Calu3 (cell line): ENCODE measurements at regions of chr3 and their contacts with region 1.

Region 1: DNA sequence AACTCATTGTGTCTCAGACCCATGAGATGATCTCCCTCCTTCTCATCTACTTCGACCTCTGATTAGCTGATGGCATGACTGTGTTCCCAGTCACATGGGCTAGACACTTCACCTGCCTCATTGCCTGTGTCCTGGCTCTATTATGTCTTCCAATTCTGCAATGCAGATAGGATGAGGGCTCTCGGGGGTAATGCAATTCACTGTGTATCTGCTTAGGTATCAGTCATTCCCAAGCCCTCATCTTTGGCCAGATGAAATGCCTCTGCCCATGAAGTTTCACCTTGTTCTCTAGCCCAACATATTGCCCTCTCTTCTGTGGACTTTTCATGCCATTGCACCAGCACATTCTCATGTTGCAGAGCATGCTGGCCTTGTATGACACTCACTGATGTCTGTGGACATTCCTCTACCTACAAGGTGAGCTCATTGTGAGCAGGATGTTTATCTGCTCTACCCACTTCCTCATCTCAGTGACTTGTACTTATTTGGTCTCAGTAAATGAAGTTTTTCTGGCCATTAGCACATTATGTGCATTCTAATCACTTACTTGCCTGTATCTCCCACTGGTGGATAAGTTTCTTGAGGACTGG is 32.3 kb downstream of the MOBP start:
- DNase-seq: peak; percentile 7
- H3K4me3 Mint-ChIP-seq: no peak overlapping the region
- H3K27ac Mint-ChIP-seq: peak overlapping the region; percentile 26
- H3K4me1 Mint-ChIP-seq: peaks cover 8% of the 10 kb centered on the region
- H3K27me3 Mint-ChIP-seq: peaks cover 34% of the 10 kb centered on the region
- CTCF ChIP-seq: no peak

Region 2: GRCh38 chr3:39414421-39414907 is 85.3 kb before region 1 on chr3:
- CTCF ChIA-PET with region 1: no interaction called
- intact Hi-C with region 1: loop called (anchors 1 kb)
- DNase-seq: peak; percentile 18
- H3K4me3 Mint-ChIP-seq: no peak overlapping the region
- H3K27ac Mint-ChIP-seq: peak overlapping the region; percentile 17
- H3K4me1 Mint-ChIP-seq: peaks cover 8% of the 10 kb centered on the region
- H3K27me3 Mint-ChIP-seq: no peaks in the 10 kb centered on the region
- CTCF ChIP-seq: no peak

Region 3: DNA sequence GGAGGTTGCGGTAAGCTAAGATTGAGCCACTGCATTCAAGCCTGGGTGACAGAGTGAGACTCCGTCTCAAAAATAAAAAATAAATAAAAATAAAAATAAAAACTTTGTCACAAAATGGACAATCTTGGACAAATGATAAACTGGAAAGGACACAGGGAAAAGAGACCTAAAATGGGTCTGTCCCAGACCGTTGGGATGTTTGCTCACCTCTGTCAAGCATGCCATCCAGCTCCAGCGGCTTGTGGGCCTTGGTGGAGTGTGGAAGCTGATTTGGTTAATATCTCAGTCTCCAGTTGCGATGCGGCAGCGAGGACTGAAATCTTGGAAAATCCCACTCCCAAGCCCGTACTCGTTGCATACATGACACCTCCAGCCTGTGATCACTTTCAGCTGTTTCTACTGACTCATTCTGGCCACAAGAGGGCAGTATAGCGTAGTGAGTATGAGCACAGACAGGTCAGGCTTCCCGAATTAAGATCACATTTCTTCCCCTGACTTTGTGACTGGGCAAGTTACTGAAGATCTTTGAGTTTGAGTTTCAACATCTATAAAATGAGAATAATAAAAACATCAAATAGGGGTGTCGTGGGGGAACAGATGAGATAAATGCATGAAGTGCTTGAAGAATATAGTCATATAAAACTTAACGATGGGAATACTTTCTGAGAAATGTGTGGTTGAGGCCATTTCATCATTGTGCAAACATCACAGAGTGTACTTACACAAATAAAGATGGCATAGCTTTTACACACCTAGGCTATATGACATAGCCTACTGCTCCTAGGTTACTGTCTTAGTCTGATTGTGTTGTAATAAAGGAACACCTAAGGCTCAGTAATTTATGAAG is 51.9 kb before region 1 on chr3:
- CTCF ChIA-PET with region 1: interaction called, 22 read pairs
- intact Hi-C with region 1: loop called (anchors 1 kb)
- DNase-seq: peak; percentile 72
- H3K4me3 Mint-ChIP-seq: no peak overlapping the region
- H3K27ac Mint-ChIP-seq: no peak overlapping the region
- H3K4me1 Mint-ChIP-seq: peaks cover 4% of the 10 kb centered on the region
- H3K27me3 Mint-ChIP-seq: no peaks in the 10 kb centered on the region
- CTCF ChIP-seq: peak; percentile 68

Region 4: GRCh38 chr3:39515681-39516441 is 16.1 kb after region 1 on chr3:
- CTCF ChIA-PET with region 1: no interaction called
- intact Hi-C with region 1: no loop called
- DNase-seq: no peak
- H3K4me3 Mint-ChIP-seq: no peak overlapping the region
- H3K27ac Mint-ChIP-seq: no peak overlapping the region
- H3K4me1 Mint-ChIP-seq: no peaks in the 10 kb centered on the region
- H3K27me3 Mint-ChIP-seq: peaks cover 46% of the 10 kb centered on the region
- CTCF ChIP-seq: no peak